ENCODE measurements at regions of chr7 and their contacts with region 1.

Region 1: DNA sequence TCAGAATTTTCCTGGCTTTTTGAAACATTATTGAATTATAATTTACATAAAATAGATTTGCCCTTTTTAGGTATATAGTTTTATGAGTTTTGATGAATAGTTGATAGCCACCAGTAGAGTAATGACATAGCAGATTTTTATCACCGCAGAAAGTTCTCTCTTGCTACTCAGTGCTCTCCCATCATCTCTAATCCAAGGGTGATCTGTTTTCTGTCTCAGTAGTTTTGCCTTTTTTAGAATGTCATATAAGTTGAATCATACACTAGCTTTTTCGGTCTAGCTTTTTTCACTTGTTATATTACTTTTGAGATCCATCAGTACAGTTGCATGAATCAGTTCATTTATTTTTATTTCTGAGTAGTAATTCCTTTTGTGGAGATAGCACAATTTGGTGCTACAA is 17.9 kb downstream of the RSBN1L start:
- DNase-seq: no peak
- H3K4me3 Mint-ChIP-seq: no peak overlapping the region
- H3K27ac Mint-ChIP-seq: no peak overlapping the region
- H3K4me1 Mint-ChIP-seq: peaks cover 15% of the 10 kb centered on the region
- H3K27me3 Mint-ChIP-seq: no peaks in the 10 kb centered on the region
- CTCF ChIP-seq: no peak

Region 2: DNA sequence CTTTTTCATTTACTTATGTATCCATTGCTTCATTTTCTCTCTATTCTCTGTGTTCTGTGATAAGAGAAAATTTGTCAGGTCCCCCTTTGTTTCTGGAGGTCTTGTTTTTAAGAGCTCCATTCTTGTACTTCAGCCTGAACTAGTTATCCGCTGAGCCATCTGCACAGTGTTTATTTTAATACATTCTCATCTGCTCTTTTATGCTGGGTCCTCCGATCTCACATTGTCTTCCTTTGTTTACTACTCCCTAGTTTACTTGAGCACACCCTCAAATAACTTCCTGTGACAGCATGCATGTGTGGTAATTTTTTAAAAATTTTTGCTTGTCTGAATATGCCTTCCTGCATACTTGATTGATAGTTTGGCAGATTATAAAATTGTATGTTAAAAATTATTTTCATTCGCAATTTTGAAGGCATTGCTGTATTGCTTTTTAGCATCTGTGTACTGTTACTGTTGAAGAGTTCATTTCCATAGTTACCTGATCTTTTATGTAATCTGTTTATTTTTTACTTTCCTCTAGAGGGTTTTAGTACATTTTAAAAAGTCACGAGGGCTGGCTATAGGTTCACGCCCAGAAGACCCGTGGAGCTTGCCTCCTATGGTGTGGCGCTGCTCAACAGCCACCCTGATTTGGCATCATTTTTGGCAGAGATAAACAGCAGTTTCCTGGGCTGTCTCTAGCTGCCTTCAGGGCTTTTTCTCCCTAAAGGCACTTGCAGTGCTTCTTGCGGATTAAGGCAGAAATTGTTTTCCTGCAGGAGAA is 13.9 kb after region 1 on chr7:
- CTCF ChIA-PET with region 1: no interaction called
- POLR2A ChIA-PET with region 1: interaction called, 18 read pairs
- intact Hi-C with region 1: no loop called
- DNase-seq: peak; percentile 61
- H3K4me3 Mint-ChIP-seq: peak overlapping the region; percentile 3
- H3K27ac Mint-ChIP-seq: peak overlapping the region; percentile 78
- H3K4me1 Mint-ChIP-seq: peaks cover 26% of the 10 kb centered on the region
- H3K27me3 Mint-ChIP-seq: no peaks in the 10 kb centered on the region
- CTCF ChIP-seq: no peak